Calu3 (cell line): ENCODE measurements at regions of chr16 and their contacts with region 1.

Region 1: DNA sequence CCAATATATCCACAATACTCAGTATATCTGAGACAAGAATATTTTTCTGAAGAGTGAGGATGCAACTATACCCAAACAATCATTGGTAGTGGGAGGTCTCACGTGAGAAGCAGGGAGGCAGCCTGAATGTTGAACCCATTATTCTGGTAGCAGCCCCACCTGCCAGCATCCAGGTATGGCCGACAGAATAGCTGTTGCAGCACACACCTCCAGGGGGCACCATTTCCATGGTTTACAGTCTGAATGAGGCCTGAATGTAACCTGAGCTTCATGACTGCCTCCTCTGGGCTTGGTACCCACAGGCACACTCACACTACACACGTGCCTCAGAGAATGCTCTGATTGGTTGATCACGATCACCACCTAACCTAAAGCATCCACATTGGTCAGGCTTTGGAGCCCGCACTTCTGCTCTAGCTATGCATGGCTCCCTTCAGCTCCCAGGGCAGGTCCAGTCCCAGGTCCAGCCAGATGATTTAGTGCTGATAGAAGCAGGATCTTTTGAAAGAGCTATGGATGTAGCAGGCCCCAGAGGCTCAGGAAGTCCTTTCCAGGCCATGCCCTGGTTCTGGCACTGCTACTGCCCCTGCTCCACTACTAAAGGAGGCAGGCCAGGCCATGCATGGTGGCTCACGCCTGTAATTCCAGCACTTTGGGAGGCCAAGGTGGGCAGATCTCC is 11.0 kb upstream of the CBFB start:
- DNase-seq: peak; percentile 92
- H3K4me3 Mint-ChIP-seq: no peak overlapping the region
- H3K27ac Mint-ChIP-seq: no peak overlapping the region
- H3K4me1 Mint-ChIP-seq: peaks cover 25% of the 10 kb centered on the region
- H3K27me3 Mint-ChIP-seq: peaks cover 22% of the 10 kb centered on the region
- CTCF ChIP-seq: peak; percentile 79

Region 2: DNA sequence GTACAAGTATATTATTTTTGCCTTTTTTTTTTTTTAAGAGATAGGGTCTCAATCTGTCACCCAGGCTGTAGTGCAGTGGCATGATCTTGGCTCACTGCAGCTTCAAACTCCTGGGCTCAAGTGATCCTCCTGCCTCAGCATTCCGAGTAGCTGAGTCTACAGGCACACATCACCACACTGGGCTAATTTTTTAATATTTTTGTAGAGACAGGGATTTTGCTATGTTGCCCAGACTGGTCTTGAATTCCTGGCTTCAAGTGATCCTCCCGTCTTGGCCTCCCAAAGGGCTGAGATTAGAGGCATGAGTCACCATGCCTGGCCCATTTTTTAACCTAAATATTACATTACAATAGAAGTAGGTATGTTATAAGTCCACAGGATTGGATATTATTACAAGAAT is 219.8 kb before region 1 on chr16:
- CTCF ChIA-PET with region 1: no interaction called
- intact Hi-C with region 1: no loop called
- DNase-seq: no peak
- H3K4me3 Mint-ChIP-seq: no peak overlapping the region
- H3K27ac Mint-ChIP-seq: no peak overlapping the region
- H3K4me1 Mint-ChIP-seq: no peaks in the 10 kb centered on the region
- H3K27me3 Mint-ChIP-seq: no peaks in the 10 kb centered on the region
- CTCF ChIP-seq: no peak

Region 3: GRCh38 chr16:66947302-66948065 is 70.5 kb before region 1 on chr16:
- CTCF ChIA-PET with region 1: no interaction called
- intact Hi-C with region 1: no loop called
- DNase-seq: peak; percentile 86
- H3K4me3 Mint-ChIP-seq: peak overlapping the region; percentile 77
- H3K27ac Mint-ChIP-seq: peak overlapping the region; percentile 32
- H3K4me1 Mint-ChIP-seq: peaks cover 20% of the 10 kb centered on the region
- H3K27me3 Mint-ChIP-seq: peaks cover 29% of the 10 kb centered on the region
- CTCF ChIP-seq: peak; percentile 89

Region 4: GRCh38 chr16:67104061-67104460 is 86.1 kb after region 1 on chr16:
- CTCF ChIA-PET with region 1: interaction called, 6 read pairs
- intact Hi-C with region 1: loop called (anchors 5 kb)
- DNase-seq: peak; percentile 39
- H3K4me3 Mint-ChIP-seq: no peak overlapping the region
- H3K27ac Mint-ChIP-seq: peak overlapping the region; percentile 15
- H3K4me1 Mint-ChIP-seq: no peaks in the 10 kb centered on the region
- H3K27me3 Mint-ChIP-seq: no peaks in the 10 kb centered on the region
- CTCF ChIP-seq: no peak

Region 5: DNA sequence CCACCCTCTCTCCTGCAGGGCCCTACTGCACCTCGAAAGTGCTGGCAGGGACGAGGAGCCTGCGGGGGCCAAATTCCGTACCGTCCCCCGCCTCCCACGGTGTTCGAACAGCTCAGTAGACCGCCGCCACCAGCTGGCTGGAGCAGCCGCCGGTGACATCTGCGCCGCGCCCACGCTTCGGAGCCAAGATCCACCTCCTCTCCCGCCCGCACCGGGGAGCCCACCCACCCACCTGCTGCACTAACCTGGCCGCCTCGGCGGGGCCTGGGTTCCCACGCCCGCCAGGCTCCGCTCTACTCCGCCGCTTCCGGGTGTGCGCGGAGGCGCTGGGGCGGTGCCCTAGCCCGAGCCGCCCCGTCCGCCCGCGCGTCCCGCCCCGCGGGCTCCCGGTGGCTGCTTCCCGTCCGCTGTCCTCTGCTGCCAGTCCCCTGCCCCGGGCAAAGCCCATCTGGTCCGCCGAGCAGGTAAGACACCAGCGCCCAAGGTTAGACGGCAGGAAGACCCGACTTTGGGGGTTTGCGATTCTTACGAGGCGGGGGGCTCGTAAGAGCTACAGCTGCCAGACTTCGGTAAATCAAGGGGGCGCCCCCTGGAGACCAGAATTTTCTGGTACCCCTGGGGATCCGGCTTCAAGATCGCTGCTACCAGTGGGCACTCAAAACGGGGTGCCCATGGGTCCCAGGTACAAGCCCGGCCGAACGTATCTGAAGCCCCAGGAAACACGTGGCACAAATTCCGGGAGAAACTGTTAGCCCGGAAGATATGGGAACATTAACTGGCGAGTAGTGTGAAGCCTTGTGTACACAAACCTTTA is 141.9 kb after region 1 on chr16 and contains the starts of genes FBXL8 and TRADD:
- CTCF ChIA-PET with region 1: interaction called, 7 read pairs
- intact Hi-C with region 1: loop called (anchors 10 kb)
- DNase-seq: peak; percentile 91
- H3K4me3 Mint-ChIP-seq: peak within 1 kb of the TSS; percentile 84
- H3K27ac Mint-ChIP-seq: peak within 1 kb of the TSS; percentile 58
- H3K4me1 Mint-ChIP-seq: peaks cover 29% of the 10 kb centered on the region
- H3K27me3 Mint-ChIP-seq: no peaks in the 10 kb centered on the region
- CTCF ChIP-seq: peak; percentile 73
- total RNA-seq, gene FBXL8: 32.0 and 36.6 TPM in 2 replicates
- total RNA-seq, gene TRADD: 34.9 and 42.7 TPM in 2 replicates

Region 6: GRCh38 chr16:67183627-67184328 is 165.8 kb after region 1 on chr16 and contains the start of gene MATCAP1:
- CTCF ChIA-PET with region 1: interaction called, 23 read pairs
- intact Hi-C with region 1: loop called (anchors 5 kb)
- DNase-seq: peak; percentile 97
- H3K4me3 Mint-ChIP-seq: no peak within 1 kb of the TSS
- H3K27ac Mint-ChIP-seq: no peak within 1 kb of the TSS
- H3K4me1 Mint-ChIP-seq: peaks cover 15% of the 10 kb centered on the region
- H3K27me3 Mint-ChIP-seq: peaks cover 12% of the 10 kb centered on the region
- CTCF ChIP-seq: no peak
- total RNA-seq, gene MATCAP1: 33.1 and 36.5 TPM in 2 replicates

Region 7: GRCh38 chr16:67278773-67279295 is 260.9 kb after region 1 on chr16:
- CTCF ChIA-PET with region 1: no interaction called
- intact Hi-C with region 1: no loop called
- DNase-seq: peak; percentile 34
- H3K4me3 Mint-ChIP-seq: peak overlapping the region; percentile 70
- H3K27ac Mint-ChIP-seq: peak overlapping the region; percentile 51
- H3K4me1 Mint-ChIP-seq: peaks cover 25% of the 10 kb centered on the region
- H3K27me3 Mint-ChIP-seq: peaks cover 5% of the 10 kb centered on the region
- CTCF ChIP-seq: no peak